ENCODE measurements at regions of chrX and their contacts with region 1.

Region 1: DNA sequence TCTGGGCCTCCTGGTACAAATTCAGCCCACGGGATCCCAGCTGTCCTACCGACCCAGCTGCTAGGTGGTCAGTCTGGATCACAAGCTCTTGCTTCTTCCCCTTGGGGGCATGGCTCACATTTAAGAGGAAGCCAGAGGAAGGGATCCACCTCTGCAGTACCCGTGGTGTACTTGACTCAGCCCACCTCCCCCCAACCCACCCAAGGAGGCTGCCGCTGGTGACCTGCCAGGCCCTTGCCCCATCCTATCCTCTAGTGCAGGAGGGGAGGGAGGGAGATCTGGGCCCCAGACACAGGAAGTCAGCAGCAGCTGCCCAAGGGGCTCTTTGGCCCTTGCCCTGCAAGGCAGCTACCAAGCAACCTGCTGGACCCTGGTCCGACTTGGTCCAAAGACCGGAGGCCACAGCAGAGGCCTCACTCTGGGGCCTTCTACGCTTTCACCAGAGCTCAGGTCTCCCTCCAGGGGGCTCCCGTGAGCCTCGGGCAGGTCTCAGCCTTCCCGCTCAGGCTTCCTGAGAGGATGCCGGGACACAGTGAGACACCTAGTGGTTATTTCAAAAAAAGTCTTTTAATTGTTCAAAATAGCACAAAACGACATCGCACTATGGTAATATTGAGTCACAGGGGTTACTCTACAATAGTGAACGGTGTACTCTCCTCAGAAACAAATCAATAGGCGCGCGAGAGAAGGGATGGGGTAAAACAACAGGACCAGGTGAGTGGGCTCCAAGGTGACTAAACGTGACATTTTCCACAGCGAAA is 2.7 kb upstream of the RENBP start:
- DNase-seq: peak; percentile 41
- H3K4me3 ChIP-seq: no peak overlapping the region
- H3K27ac ChIP-seq: no peak overlapping the region
- H3K27me3 ChIP-seq: no peaks in the 10 kb centered on the region
- CTCF ChIP-seq: peak; percentile 89

Region 2: GRCh38 chrX:153411255-153411987 is 535.8 kb before region 1 on chrX and contains the start of gene ZFP92:
- CTCF ChIA-PET with region 1: no interaction called
- POLR2A ChIA-PET with region 1: no interaction called
- DNase-seq: no peak
- H3K4me3 ChIP-seq: peak within 1 kb of the TSS; percentile 25; the same call in 1 of the 2 replicates
- H3K27ac ChIP-seq: no peak within 1 kb of the TSS
- H3K27me3 ChIP-seq: peaks cover 6% of the 10 kb centered on the region
- CTCF ChIP-seq: no peak
- polyA plus RNA-seq, gene ZFP92: 0.02 TPM in 2 replicates

Region 3: GRCh38 chrX:153763989-153764755 is 183.0 kb before region 1 on chrX and contains the start of gene PLXNB3:
- CTCF ChIA-PET with region 1: interaction called, 33 read pairs
- POLR2A ChIA-PET with region 1: no interaction called
- DNase-seq: peak; percentile 21
- H3K4me3 ChIP-seq: peak within 1 kb of the TSS; percentile 59
- H3K27ac ChIP-seq: no peak within 1 kb of the TSS
- H3K27me3 ChIP-seq: no peaks in the 10 kb centered on the region
- CTCF ChIP-seq: peak; percentile 75
- polyA plus RNA-seq, gene PLXNB3: 4.6 and 5.5 TPM in 2 replicates

Region 4: DNA sequence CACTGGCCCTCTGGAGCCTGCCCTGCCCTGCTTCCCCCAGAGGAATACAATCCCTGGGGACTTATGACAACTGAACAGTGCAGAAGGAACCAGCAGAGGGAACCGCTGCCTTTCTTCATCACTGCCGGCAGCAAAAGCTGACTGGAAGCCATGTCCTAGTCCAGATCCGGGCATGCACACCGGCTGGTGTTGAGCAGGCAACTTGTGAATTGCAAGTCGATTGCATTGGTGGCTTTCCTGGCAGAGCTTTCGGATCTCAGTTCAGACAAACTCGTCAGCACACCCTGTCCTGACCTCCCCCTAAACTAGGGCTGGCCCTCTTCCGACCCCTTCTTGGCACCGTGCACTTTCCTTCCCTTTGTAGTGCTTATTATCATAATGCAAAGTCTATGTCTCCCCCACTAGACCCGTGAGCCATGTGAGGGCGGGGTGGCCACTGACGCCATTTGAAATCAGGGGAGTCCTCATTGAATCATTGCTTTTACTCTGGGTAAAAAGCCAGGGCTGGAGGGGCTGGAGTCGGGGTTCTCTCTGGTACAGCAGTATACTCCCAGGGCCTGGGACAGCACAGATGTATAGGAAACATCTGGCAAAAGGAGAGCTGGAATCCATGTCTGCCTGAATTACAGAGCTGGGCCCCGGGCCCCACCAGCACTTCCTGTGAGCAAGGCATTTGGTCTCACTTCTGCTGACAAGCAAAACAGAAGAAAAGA is 22.9 kb before region 1 on chrX:
- CTCF ChIA-PET with region 1: interaction called, 14 read pairs
- POLR2A ChIA-PET with region 1: interaction called, 3 read pairs
- DNase-seq: no peak
- H3K4me3 ChIP-seq: no peak overlapping the region
- H3K27ac ChIP-seq: no peak overlapping the region
- H3K27me3 ChIP-seq: peaks cover 2% of the 10 kb centered on the region
- CTCF ChIP-seq: peak; percentile 30

Region 5: DNA sequence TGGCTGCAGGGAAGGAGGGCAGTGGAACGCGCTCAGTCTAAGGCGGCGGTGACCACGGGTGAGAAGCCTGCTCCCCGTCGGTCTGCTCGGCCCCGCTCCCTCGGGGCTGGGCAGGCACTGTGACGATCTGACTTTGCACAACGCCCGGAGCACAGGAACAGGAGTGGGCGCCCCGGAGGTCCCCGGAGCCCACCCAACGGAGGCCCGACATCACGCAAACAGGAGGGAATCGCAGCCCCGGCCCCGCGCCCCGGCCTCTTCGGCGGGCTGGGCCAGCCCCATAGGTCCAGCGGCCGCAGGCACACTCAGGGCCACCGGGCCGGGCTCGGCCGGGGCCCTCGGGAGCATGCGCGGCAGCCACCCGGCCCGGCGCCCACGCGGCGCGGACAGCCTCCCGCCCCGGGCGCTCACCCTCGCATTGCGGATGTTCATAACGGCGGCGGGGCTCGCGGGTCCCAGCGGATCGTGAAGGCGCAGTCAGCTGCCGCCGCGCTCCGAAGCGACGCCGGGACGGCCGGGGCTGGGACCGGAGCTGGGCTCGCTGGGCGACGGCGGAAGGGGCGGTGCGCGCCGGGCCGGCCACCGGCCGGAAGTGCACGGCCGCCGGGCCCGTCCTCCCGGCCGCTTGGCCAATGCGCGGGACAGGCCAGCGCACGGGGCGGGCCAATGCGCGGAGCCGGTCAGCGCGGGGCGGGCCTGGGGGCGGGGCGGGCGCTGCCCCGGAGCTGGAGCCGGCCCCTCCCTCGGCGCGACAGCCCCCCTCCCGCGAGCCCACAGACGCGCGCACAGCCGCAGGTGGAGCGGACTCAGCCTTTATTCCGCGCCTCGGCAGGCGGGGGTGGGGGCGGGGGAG is 12.5 kb before region 1 on chrX and contains the start of gene NAA10:
- CTCF ChIA-PET with region 1: interaction called, 29 read pairs
- POLR2A ChIA-PET with region 1: interaction called, 4 read pairs
- DNase-seq: no peak
- H3K4me3 ChIP-seq: peak within 1 kb of the TSS; percentile 74
- H3K27ac ChIP-seq: no peak within 1 kb of the TSS
- H3K27me3 ChIP-seq: no peaks in the 10 kb centered on the region
- CTCF ChIP-seq: no peak
- polyA plus RNA-seq, gene NAA10: 42.9 and 63.4 TPM in 2 replicates